HEK293T (cell line): ENCODE measurements at regions of chr7 and their contacts with region 1.

Region 1: GRCh38 chr7:134986363-134987251 is at the start of gene AGBL3:
- DNase-seq: peak; percentile 99

Region 2: DNA sequence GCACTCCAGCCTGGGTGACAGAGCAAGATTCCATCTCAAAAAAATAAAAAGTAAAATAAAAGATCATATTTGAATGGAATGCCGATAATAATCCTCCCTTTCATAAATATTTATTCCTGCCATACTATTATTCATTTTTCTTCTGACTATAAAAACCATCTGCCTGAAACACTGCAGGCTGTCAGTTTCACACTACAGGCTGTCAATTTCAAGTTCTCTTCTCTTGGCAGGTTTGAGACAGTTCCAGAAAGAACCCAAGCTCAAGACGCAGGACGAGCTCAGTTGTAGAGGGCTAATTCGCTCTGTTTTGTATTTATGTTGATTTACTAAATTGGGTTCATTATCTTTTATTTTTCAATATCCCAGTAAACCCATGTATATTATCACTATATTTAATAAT is 18.5 kb before region 1 on chr7:
- CTCF ChIA-PET with region 1: interaction called, 4 read pairs
- POLR2A ChIA-PET with region 1: interaction called, 12 read pairs
- DNase-seq: no peak

Region 3: GRCh38 chr7:135160098-135160857 is 173.7 kb after region 1 on chr7:
- CTCF ChIA-PET with region 1: no interaction called
- POLR2A ChIA-PET with region 1: interaction called, 16 read pairs
- DNase-seq: peak; percentile 4

Region 4: DNA sequence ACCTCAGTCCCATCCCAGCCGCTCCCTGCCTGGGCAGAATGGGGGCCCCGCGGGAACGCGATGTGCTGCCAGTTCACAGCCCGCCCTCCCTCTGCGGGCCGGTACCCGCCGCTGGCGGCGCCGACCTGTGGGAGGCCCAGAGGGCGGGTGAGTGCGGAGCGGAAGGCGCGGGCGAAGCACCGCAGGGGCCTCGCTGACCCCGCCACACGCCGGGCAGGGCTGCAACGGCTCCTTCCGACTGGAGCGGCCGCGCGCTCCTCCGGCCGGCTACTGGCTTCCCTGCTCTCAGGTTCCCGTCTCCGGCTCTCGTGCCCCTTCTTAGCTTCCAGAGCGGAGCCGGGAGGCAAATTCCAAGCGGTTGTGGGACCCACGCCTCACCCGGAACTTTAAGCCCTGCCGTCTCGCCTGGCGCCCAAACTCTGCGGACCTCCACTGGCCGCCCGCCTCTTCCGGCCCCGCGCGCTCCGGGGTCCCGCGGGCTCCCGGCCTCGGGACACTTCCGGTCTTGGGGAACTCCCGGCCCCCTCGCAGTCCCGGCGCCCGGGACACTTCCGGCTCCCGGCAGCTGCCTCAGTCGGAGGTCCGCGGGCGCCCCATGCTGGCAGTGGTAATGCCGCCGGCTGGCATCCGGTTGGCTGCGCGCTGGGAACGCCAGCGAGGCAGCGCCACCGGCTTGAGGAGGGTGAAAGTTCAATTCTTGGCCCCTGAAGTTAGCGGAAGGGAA is 183.8 kb after region 1 on chr7 and contains the start of gene CYREN:
- CTCF ChIA-PET with region 1: interaction called, 3 read pairs
- POLR2A ChIA-PET with region 1: interaction called, 16 read pairs
- DNase-seq: peak; percentile 99

Region 5: DNA sequence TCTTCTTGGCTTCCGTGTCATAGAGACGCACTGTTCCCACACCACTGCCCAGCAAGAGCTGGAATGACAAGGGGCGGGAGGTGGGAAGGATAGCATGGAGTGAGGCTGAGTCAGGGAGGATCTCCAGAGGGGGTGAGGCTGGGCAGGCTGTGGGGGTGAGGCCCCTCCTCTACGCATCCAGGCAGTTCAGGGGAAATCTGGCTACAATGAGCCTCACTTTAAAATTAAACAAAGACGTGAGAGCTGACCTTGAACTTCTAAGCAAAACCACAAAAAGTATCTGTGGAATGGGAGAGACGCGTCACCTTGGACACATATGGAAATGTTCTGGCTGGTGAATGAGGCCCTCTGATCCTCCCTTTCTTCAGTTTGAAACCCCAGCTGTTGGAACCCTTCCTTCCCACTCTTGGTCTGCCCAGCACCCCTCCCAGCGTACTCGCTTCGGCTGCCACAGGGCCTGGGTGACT is 207.0 kb after region 1 on chr7:
- CTCF ChIA-PET with region 1: no interaction called
- POLR2A ChIA-PET with region 1: no interaction called
- DNase-seq: no peak

Region 6: GRCh38 chr7:135211179-135211945 is 224.8 kb after region 1 on chr7 and contains the start of gene WDR91:
- CTCF ChIA-PET with region 1: no interaction called
- POLR2A ChIA-PET with region 1: interaction called, 12 read pairs
- DNase-seq: peak; percentile 100